Posterior vena cava (tissue), 2 donors: ENCODE measurements at regions of chr19 and their contacts with region 1.

Region 1: GRCh38 chr19:2184422-2184975 is 20.8 kb downstream of the DOT1L start:
- DNase-seq: no peak

Region 2: GRCh38 chr19:277581-278165 is 1906.8 kb before region 1 on chr19:
- intact Hi-C with region 1: no loop called
- DNase-seq: no peak

Region 3: GRCh38 chr19:2171349-2172145 is 13.0 kb before region 1 on chr19:
- intact Hi-C with region 1: loop called in 1 of 2 experiments (anchors 2 kb)
- DNase-seq: no peak